T-cell (primary cell): ENCODE measurements at regions of chr2 and their contacts with region 1.

Region 1: DNA sequence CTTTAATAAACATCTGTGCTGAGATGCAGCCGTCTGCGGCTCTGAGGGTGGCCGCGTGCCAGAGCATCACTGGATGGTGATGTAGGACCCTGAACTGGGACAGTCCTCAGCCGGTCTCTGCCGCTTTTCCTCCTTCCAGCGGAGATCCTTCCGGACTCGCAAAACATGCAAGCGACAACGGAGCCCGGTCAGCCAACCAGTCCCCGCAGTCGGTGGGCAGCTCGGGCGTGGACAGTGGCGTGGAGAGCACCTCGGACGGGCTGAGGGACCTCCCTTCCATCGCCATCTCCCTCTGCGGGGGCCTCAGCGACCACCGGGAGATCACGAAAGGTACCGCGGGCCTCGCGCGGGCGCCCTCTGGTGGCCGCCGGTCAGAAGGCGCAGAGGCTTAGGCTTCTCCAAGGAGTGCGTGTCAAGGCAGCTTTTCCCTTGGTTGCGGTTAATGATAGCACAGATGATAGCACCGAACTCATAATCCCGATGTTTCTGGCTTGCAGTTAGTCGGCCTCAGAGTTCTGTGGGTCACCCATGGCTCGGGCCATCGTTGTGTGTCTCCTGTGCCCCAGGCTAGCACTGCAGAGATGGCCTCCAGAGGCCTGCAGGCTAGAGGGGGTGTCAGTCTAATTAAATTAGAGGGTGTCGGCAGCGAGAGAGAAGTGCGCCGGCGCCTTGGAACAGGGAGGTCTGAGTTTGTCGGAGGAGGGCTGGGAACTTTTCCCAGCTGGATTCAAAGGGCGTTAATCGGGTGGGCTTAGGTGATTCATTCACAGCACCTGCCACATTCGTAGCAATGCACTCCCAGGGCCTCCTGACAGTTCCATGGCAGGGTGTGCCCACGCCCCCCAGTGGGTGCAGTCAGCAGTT is 38.5 kb downstream of the LPIN1 start:
- DNase-seq: peak in 30 of 35 experiments; percentile 10 to 66 (median 28)
- ATAC-seq: peak; percentile 52 to 65 (median 56)
- H3K4me3 ChIP-seq: no peak overlapping the region
- H3K4me3 Mint-ChIP-seq: no peak overlapping the region
- H3K27ac ChIP-seq: no peak overlapping the region
- H3K27ac Mint-ChIP-seq: peak overlapping the region in 1 of 2 donors; percentile 34
- H3K4me1 ChIP-seq: no peaks in the 10 kb centered on the region
- H3K4me1 Mint-ChIP-seq: peaks cover 0 to 7% (median 0%) of the 10 kb centered on the region in 3 donors
- H3K27me3 ChIP-seq: peaks cover 0 to 2% of the 10 kb centered on the region in 2 experiments
- H3K27me3 Mint-ChIP-seq: no peaks in the 10 kb centered on the region

Region 2: DNA sequence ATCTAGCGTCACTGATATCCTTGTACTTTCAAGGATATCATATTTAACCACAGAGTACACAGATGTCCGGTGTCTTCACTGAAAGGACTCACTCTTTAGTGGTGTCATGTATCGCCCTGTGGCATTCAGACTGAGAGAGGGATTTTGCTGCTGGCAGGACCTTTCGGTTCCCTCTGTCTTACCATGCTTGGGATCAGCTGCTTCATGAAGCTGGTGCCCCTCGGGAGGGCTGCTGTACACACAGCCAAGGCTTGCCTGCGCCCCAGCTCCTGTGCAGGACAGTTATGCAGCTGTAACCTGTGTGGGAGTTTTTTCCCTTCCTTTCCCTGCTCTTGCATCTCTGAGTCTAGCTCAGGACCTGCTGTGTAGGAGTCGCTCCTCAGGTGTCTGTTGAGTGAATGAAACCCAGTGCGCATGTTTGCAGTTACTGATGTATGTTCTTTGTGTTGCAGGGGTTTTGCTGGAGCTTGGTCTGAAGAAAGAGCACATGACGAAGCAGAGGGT is 186.7 kb before region 1 on chr2:
- CTCF ChIA-PET with region 1: no interaction called
- POLR2A ChIA-PET with region 1: interaction called in 1 of 2 experiments, 10 read pairs
- DNase-seq: no peak
- ATAC-seq: no peak
- H3K4me3 ChIP-seq: no peak overlapping the region
- H3K4me3 Mint-ChIP-seq: no peak overlapping the region
- H3K27ac ChIP-seq: no peak overlapping the region
- H3K27ac Mint-ChIP-seq: no peak overlapping the region
- H3K4me1 ChIP-seq: no peaks in the 10 kb centered on the region
- H3K4me1 Mint-ChIP-seq: no peaks in the 10 kb centered on the region
- H3K27me3 ChIP-seq: peaks cover 0 to 3% of the 10 kb centered on the region in 2 experiments
- H3K27me3 Mint-ChIP-seq: peaks cover 0 to 6% of the 10 kb centered on the region in 2 donors

Region 3: GRCh38 chr2:11705063-11705462 is 79.9 kb before region 1 on chr2:
- CTCF ChIA-PET with region 1: no interaction called
- POLR2A ChIA-PET with region 1: interaction called in 1 of 2 experiments, 11 read pairs
- DNase-seq: no peak
- ATAC-seq: no peak
- H3K4me3 ChIP-seq: no peak overlapping the region
- H3K4me3 Mint-ChIP-seq: no peak overlapping the region
- H3K27ac ChIP-seq: no peak overlapping the region
- H3K27ac Mint-ChIP-seq: no peak overlapping the region
- H3K4me1 ChIP-seq: no peaks in the 10 kb centered on the region
- H3K4me1 Mint-ChIP-seq: no peaks in the 10 kb centered on the region
- H3K27me3 ChIP-seq: no peaks in the 10 kb centered on the region
- H3K27me3 Mint-ChIP-seq: no peaks in the 10 kb centered on the region